ENCODE measurements at regions of chr10 and their contacts with region 1.

Region 1: DNA sequence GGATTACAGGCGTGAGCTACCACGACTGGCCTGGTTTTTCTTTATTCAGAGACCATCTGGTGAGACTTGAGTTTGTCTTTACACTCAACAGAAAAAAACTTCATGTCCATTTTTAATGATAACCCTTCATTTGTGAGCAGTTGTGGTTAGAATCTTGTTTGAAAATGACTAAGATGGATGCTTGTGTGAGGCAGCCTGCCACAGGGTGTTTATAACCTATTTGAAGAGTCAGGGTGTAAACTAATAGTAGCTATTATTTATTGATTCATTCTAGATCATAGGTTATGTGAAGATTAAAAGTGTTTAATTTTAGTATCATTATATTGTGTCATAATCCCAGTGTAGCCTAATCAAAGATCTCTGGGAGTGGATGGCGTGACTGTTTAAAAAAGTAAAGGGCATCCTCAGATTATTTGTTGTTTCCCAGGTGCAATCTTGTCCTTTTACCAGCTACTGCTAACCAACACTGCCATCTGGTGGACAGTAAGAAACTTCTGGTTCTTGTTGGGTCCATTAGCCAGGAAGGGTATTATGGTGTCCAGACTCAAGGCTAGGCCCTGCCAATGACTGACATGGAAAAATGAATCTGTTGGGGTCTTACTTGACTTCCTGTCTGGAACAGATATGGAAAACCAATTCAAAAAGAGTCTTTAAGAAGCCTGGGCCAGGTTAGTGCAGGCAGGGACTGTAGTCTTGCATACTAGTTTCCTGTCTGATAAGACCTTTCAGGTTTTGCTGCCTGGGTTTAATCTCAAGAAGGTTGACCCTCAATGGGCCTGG is 24.9 kb downstream of the NRBF2 start:
- DNase-seq: peak in 11 of 14 experiments; percentile 10 to 89 (median 36)
- ATAC-seq: peak; percentile 75
- H3K4me3 ChIP-seq: no peak overlapping the region
- H3K4me3 Mint-ChIP-seq: no peak overlapping the region
- H3K27ac ChIP-seq: no peak overlapping the region
- H3K27ac Mint-ChIP-seq: no peak overlapping the region
- H3K4me1 ChIP-seq: no peaks in the 10 kb centered on the region
- H3K4me1 Mint-ChIP-seq: peaks cover 14% of the 10 kb centered on the region
- H3K27me3 ChIP-seq: no peaks in the 10 kb centered on the region
- H3K27me3 Mint-ChIP-seq: no peaks in the 10 kb centered on the region
- CTCF ChIP-seq: peak; percentile 94

Region 2: DNA sequence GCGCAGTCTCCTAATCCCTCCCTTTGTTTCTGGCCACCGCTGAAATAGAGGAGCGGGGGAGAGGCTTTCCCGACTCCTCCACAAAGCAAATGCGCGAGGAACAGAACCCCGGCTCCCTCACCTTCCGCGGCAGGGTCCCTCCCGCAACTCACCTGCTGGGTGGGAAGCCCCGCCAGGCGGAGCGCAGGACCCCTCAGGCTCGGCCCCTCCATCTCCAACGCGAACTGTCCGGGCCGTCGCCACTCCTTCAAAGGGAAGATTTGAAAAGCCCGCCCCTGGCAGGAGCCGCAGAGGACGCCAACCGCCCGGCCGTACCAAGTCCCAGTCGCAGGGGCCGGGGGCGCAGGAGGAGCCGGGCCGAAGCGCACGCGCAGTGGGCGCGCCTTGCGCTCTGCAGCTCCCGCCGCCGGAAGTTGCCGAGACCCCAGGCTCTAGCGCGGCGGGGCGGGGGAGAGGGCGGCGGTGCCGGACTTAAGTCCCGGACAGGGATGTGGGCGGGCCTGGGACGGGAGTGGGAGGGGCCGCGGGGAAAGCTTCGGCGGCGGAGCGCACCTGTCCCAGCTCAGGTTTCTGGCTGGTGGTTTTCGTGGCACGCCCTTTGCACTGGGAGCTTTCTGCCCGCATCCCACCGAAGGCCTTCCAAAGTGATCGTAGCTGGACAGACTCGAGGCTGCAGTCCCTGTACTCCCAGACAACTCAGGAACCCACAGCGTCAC is 889.5 kb before region 1 on chr10 and contains the start of gene RTKN2:
- CTCF ChIA-PET with region 1: no interaction called
- POLR2A ChIA-PET with region 1: no interaction called
- intact Hi-C with region 1: loop called in 1 of 2 experiments (anchors 10 kb)
- DNase-seq: peak; percentile 40 to 87 (median 58)
- ATAC-seq: peak; percentile 83
- H3K4me3 ChIP-seq: peak within 1 kb of the TSS; percentile 71
- H3K4me3 Mint-ChIP-seq: peak within 1 kb of the TSS; percentile 90
- H3K27ac ChIP-seq: no peak within 1 kb of the TSS
- H3K27ac Mint-ChIP-seq: no peak within 1 kb of the TSS
- H3K4me1 ChIP-seq: peaks cover 16% of the 10 kb centered on the region
- H3K4me1 Mint-ChIP-seq: peaks cover 22% of the 10 kb centered on the region
- H3K27me3 ChIP-seq: no peaks in the 10 kb centered on the region
- H3K27me3 Mint-ChIP-seq: peaks cover 27% of the 10 kb centered on the region
- CTCF ChIP-seq: no peak
- total RNA-seq, gene RTKN2: 3.7 to 3.9 TPM

Region 3: DNA sequence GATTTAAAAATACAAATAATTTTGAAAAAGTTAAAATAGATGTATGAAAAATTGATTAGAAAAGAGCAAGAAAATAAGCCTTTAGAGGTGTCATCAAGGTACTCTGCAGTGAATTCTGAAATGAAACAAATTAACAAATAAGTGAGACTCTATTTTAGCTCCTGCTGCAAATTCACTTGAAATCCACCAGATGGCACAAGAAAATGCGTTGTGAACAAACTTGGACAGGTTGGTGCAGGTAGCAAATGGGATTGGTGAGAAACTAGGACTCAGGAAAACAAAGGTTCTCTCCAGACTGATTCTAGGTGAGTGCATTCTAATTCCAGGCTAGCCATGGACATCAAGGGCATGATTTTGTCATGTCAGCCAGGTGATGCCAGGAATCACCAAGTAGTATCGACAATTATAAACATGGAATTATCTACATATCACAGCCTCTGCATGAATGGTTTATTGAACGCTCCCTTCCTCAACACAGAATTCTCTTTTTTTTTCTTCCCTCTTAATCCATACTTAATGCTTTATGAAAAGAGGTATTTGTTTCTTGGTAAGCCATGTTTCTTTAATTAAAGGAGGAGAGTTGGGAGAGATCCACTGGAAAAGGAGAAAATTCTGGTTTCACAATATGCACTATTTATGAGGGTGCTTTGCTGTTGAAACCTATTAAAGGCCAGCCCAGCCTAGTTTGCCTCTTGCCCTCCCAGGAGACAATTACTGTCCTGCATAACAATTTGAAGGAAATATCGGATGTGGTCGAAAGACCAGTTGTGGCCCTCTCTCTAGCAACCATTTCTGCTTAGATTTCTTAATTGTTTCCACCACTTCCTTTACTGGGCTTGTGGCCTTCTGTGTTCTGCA is 665.8 kb before region 1 on chr10:
- CTCF ChIA-PET with region 1: interaction called, 3 read pairs
- POLR2A ChIA-PET with region 1: no interaction called
- intact Hi-C with region 1: loop called (anchors 2 kb)
- DNase-seq: peak in 3 of 14 experiments; percentile 25 to 57 (median 52)
- ATAC-seq: no peak
- H3K4me3 ChIP-seq: no peak overlapping the region
- H3K4me3 Mint-ChIP-seq: no peak overlapping the region
- H3K27ac ChIP-seq: no peak overlapping the region
- H3K27ac Mint-ChIP-seq: no peak overlapping the region
- H3K4me1 ChIP-seq: no peaks in the 10 kb centered on the region
- H3K4me1 Mint-ChIP-seq: peaks cover 4% of the 10 kb centered on the region
- H3K27me3 ChIP-seq: no peaks in the 10 kb centered on the region
- H3K27me3 Mint-ChIP-seq: peaks cover 18% of the 10 kb centered on the region
- CTCF ChIP-seq: peak; percentile 63

Region 4: DNA sequence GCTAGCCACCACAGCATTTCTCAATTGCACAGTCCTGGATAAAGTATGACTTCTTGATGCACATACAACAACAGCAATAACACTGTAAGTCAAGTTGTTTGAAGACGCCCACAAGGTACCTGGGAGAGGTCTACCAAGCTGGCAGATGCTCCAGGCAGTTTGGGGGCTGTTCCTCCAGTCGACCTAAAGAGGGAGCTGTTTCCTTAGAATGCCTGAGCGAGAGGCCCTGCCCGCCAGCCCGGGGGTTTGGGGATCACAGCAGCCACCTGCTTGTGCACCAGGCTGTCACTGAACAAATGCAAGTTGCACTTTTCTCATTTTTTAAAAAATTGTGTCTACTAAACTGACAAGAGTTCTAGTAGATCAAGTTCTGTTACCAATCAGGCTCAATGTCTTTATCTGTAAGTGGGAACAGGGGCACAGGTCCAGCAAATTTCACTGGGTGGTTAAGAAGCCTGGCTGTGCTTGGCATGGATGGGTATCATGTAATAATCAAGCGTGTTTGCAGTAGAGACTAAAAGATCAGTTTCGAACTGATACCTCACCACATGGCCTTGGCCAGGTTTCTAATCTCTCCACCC is 547.3 kb before region 1 on chr10:
- CTCF ChIA-PET with region 1: interaction called, 4 read pairs
- POLR2A ChIA-PET with region 1: no interaction called
- intact Hi-C with region 1: loop called (anchors 5 kb)
- DNase-seq: peak; percentile 48 to 86 (median 62)
- ATAC-seq: peak; percentile 99
- H3K4me3 ChIP-seq: no peak overlapping the region
- H3K4me3 Mint-ChIP-seq: no peak overlapping the region
- H3K27ac ChIP-seq: no peak overlapping the region
- H3K27ac Mint-ChIP-seq: no peak overlapping the region
- H3K4me1 ChIP-seq: peaks cover 8% of the 10 kb centered on the region
- H3K4me1 Mint-ChIP-seq: peaks cover 4% of the 10 kb centered on the region
- H3K27me3 ChIP-seq: no peaks in the 10 kb centered on the region
- H3K27me3 Mint-ChIP-seq: peaks cover 12% of the 10 kb centered on the region
- CTCF ChIP-seq: peak; percentile 83

Region 5: DNA sequence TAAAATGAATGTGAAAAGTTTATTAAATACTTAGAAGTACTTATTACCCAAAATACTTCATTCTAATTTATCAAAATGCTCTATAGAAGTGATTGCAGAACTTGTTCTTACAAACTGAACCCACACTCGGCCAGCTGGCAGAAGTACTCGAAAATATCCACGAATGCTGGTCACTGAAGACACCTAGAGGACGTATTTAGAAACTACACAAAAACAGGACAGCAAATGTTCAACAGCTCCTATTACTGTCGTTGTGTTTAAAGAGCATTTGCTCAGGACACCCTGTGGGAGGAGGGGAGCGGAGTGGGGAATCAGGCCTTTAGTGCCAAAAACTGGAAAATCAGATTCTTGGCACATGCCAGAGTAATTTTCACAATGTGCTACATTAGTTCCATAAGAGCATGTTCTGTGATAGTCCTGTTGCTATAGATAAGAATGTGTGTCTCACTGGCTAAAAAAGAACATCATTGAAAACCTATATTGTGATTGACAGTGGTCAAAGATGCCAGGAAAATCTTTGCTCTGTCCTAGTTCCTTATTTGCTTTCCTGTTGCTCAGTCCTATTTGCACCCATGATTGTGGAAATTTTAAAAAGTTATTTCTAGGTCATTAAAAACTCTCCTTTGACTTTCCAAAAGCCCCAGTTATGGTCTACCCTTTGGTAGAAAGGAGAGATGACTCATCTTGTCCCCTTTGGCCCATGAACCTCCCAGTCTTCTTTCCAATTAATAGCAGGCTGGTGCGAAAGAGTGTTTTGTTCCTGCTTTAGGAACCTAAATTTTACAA is 73.9 kb before region 1 on chr10:
- CTCF ChIA-PET with region 1: interaction called, 4 read pairs
- POLR2A ChIA-PET with region 1: no interaction called
- intact Hi-C with region 1: loop called (anchors 2 to 5 kb)
- DNase-seq: peak in 13 of 14 experiments; percentile 2 to 74 (median 24)
- ATAC-seq: peak; percentile 71
- H3K4me3 ChIP-seq: no peak overlapping the region
- H3K4me3 Mint-ChIP-seq: no peak overlapping the region
- H3K27ac ChIP-seq: no peak overlapping the region
- H3K27ac Mint-ChIP-seq: no peak overlapping the region
- H3K4me1 ChIP-seq: no peaks in the 10 kb centered on the region
- H3K4me1 Mint-ChIP-seq: no peaks in the 10 kb centered on the region
- H3K27me3 ChIP-seq: peaks cover 0 to 2% of the 10 kb centered on the region in 2 experiments
- H3K27me3 Mint-ChIP-seq: peaks cover 14% of the 10 kb centered on the region
- CTCF ChIP-seq: peak; percentile 80

Region 6: DNA sequence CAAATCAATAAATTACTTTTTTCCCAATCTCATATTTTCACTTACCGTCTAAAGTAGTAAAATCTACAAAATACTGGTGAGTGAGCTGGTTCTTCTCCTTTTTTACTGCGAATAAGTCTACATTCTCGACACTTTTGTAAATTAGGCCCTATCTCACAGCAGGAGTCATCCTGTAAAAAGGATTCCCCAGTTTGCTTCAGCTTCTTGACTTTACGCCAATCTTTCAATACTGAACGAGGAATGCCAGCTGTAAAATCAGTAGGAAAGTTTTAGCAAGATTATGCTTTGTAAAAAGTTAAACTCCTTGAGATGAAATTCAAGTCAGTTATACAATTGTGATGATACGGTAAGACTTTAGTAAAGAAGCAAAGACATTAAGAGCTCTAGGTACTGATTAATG is 42.4 kb after region 1 on chr10:
- CTCF ChIA-PET with region 1: no interaction called
- POLR2A ChIA-PET with region 1: no interaction called
- intact Hi-C with region 1: no loop called
- DNase-seq: no peak
- ATAC-seq: no peak
- H3K4me3 ChIP-seq: no peak overlapping the region
- H3K4me3 Mint-ChIP-seq: no peak overlapping the region
- H3K27ac ChIP-seq: no peak overlapping the region
- H3K27ac Mint-ChIP-seq: no peak overlapping the region
- H3K4me1 ChIP-seq: no peaks in the 10 kb centered on the region
- H3K4me1 Mint-ChIP-seq: peaks cover 29% of the 10 kb centered on the region
- H3K27me3 ChIP-seq: no peaks in the 10 kb centered on the region
- H3K27me3 Mint-ChIP-seq: no peaks in the 10 kb centered on the region
- CTCF ChIP-seq: no peak

Region 7: GRCh38 chr10:63720072-63720537 is 562.1 kb after region 1 on chr10:
- CTCF ChIA-PET with region 1: interaction called, 13 read pairs
- POLR2A ChIA-PET with region 1: interaction called, 3 read pairs
- intact Hi-C with region 1: no loop called
- DNase-seq: peak in 13 of 14 experiments; percentile 9 to 79 (median 33)
- ATAC-seq: peak; percentile 88
- H3K4me3 ChIP-seq: no peak overlapping the region
- H3K4me3 Mint-ChIP-seq: no peak overlapping the region
- H3K27ac ChIP-seq: no peak overlapping the region
- H3K27ac Mint-ChIP-seq: peak overlapping the region; percentile 19
- H3K4me1 ChIP-seq: peaks cover 4% of the 10 kb centered on the region
- H3K4me1 Mint-ChIP-seq: peaks cover 10% of the 10 kb centered on the region
- H3K27me3 ChIP-seq: peaks cover 0 to 10% of the 10 kb centered on the region in 2 experiments
- H3K27me3 Mint-ChIP-seq: peaks cover 4% of the 10 kb centered on the region
- CTCF ChIP-seq: peak; percentile 99

Measured in CD4-positive, alpha-beta T cell (primary cell).